ENCODE measurements at regions of chr5 and their contacts with region 1.

Region 1: GRCh38 chr5:54492178-54492577 is 25.4 kb upstream of the SNX18 start:
- DNase-seq: no peak
- H3K4me3 ChIP-seq: no peak overlapping the region
- H3K27ac ChIP-seq: no peak overlapping the region
- H3K4me1 ChIP-seq: no peaks in the 10 kb centered on the region
- H3K27me3 ChIP-seq: peaks cover 3 to 19% of the 10 kb centered on the region in 2 experiments
- CTCF ChIP-seq: no peak
- POLR2A ChIP-seq: no peak

Region 2: GRCh38 chr5:54243473-54244080 is 248.6 kb before region 1 on chr5:
- CTCF ChIA-PET with region 1: interaction called, 100 read pairs
- POLR2A ChIA-PET with region 1: no interaction called
- dilution Hi-C with region 1: no loop called
- intact Hi-C with region 1: loop called (anchors 1 kb)
- DNase-seq: peak; percentile 47
- H3K4me3 ChIP-seq: no peak overlapping the region
- H3K27ac ChIP-seq: no peak overlapping the region
- H3K4me1 ChIP-seq: peaks cover 14% of the 10 kb centered on the region
- H3K27me3 ChIP-seq: peaks cover 0 to 1% of the 10 kb centered on the region in 2 experiments
- CTCF ChIP-seq: peak; percentile 44 to 48
- POLR2A ChIP-seq: no peak

Region 3: DNA sequence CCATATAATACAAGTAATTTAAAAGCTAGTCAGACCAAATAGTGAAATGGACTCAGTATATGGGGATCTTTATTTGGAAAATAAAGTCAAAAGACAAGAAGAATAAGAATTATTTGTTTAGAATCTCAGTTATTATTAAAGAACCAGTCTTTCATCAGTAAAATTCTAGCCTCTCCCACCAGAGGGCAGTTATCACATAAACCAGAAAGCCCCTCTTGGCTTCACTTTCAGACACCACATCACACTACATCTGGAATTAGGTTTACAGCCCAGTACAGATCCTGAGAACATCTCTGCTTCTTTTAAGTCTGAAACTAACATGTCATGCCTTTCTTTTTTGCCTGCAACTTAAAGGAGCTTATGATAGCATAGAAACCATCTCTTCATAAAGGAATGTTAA is 48.9 kb before region 1 on chr5:
- CTCF ChIA-PET with region 1: interaction called, 65 read pairs
- POLR2A ChIA-PET with region 1: no interaction called
- dilution Hi-C with region 1: no loop called
- intact Hi-C with region 1: loop called (anchors 5 kb)
- DNase-seq: peak; percentile 51
- H3K4me3 ChIP-seq: no peak overlapping the region
- H3K27ac ChIP-seq: no peak overlapping the region
- H3K4me1 ChIP-seq: no peaks in the 10 kb centered on the region
- H3K27me3 ChIP-seq: peaks cover 14 to 15% of the 10 kb centered on the region in 2 experiments
- CTCF ChIP-seq: peak; percentile 43 to 44
- POLR2A ChIP-seq: no peak

Region 4: GRCh38 chr5:54469622-54470021 is 22.6 kb before region 1 on chr5:
- CTCF ChIA-PET with region 1: interaction called, 16 read pairs
- POLR2A ChIA-PET with region 1: no interaction called
- dilution Hi-C with region 1: no loop called
- intact Hi-C with region 1: no loop called
- DNase-seq: no peak
- H3K4me3 ChIP-seq: no peak overlapping the region
- H3K27ac ChIP-seq: no peak overlapping the region
- H3K4me1 ChIP-seq: no peaks in the 10 kb centered on the region
- H3K27me3 ChIP-seq: peaks cover 2 to 10% of the 10 kb centered on the region in 2 experiments
- CTCF ChIP-seq: no peak
- POLR2A ChIP-seq: no peak

Region 5: GRCh38 chr5:54558362-54558761 is 66.2 kb after region 1 on chr5:
- CTCF ChIA-PET with region 1: no interaction called
- POLR2A ChIA-PET with region 1: no interaction called
- dilution Hi-C with region 1: no loop called
- intact Hi-C with region 1: loop called (anchors 2 kb)
- DNase-seq: peak; percentile 76
- H3K4me3 ChIP-seq: peak overlapping the region in 1 of 3 experiments; percentile 5
- H3K27ac ChIP-seq: peak overlapping the region; percentile 58
- H3K4me1 ChIP-seq: peaks cover 41% of the 10 kb centered on the region
- H3K27me3 ChIP-seq: no peaks in the 10 kb centered on the region
- CTCF ChIP-seq: no peak
- POLR2A ChIP-seq: no peak

Region 6: DNA sequence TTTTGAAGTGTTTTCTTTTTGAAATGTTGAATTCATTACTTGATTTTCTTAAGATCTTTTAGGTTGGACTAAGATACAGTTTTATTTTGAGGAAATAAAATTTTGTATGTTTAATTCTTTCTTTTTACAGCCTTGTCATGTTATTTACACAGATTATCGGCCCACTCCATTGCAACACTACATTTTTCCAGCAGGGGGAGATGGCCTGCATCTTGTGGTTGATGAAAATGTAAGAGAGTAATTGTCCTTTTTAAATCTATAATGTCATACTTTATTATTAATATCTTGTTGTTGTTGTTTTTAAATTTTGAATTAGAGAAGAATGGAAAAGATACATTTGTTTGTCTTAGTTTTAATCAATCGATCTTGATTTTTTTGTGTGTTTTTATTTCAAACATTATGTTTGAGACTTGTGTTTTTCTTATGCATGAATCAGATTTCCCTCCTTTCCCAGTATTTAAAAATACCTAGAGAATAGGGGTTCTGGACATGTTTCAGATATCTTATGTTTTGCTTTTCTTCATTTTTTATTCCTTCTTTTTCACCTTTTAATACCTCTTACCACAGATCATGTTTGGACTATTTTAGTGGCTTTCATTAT is 852.3 kb after region 1 on chr5:
- CTCF ChIA-PET with region 1: no interaction called
- POLR2A ChIA-PET with region 1: no interaction called
- dilution Hi-C with region 1: no loop called
- intact Hi-C with region 1: no loop called
- DNase-seq: peak; percentile 86
- H3K4me3 ChIP-seq: no peak overlapping the region
- H3K27ac ChIP-seq: no peak overlapping the region
- H3K4me1 ChIP-seq: peaks cover 3% of the 10 kb centered on the region
- H3K27me3 ChIP-seq: no peaks in the 10 kb centered on the region
- CTCF ChIP-seq: peak; percentile 57 to 66
- POLR2A ChIP-seq: no peak

Measured in endothelial cell of umbilical vein (primary cell).